CD4-positive, alpha-beta memory T cell (primary cell): ENCODE measurements at regions of chr10 and their contacts with region 1.

Region 1: DNA sequence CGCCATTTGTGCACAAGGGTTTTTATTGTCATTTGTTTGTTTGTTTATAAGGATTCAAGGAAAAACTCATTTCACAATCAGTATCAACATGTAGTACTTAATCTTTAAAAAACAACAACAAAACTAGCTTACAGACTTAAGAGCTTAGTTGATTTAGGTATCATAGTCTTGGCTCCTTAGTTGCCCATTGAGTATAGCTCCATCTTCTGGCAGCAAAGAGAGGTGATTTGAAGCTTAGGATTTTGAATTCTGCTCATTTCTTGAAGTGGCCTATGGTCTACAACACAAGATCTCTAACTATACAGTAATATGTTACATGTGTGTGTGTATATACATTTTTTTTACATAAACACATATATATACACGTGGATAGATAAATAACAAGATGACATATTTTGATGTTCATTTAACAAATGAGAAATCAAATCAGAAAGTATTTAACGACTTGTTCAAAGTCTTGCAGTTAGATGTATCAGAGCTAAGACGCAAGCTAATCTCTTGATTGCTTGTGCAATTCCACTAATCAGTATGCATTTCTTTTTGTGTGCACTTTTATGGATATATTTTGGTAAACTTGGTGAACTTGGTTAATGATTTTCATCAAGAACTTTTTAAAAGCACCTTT is 307.3 kb downstream of the CAMK1D start:
- DNase-seq: peak in 4 of 5 donors; percentile 56 to 64 (median 60)
- H3K4me3 ChIP-seq: no peak overlapping the region
- H3K4me3 Mint-ChIP-seq: no peak overlapping the region
- H3K27ac ChIP-seq: no peak overlapping the region
- H3K27ac Mint-ChIP-seq: no peak overlapping the region
- H3K4me1 ChIP-seq: no peaks in the 10 kb centered on the region
- H3K4me1 Mint-ChIP-seq: peaks cover 2 to 15% (median 7%) of the 10 kb centered on the region in 4 donors
- H3K27me3 ChIP-seq: no peaks in the 10 kb centered on the region
- H3K27me3 Mint-ChIP-seq: no peaks in the 10 kb centered on the region

Region 2: DNA sequence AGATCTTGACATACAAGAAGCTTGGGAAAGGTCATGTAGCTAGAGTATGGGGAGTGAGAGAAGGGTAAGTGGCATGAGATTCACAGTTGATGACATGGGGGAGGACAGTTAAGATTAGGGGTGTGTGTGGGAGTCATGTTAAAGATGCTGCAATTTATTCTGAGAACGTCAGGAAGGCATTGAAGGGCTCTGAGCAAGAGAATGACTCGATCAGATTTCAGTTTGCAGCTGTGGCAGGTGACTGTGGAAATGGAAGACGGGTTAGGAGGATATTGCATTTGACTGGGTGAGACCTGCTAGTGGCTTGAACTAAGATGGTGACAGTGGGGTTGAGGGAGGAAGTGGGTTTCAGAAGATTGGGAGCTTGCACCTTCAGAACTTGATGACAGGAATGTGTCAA is 455.1 kb before region 1 on chr10:
- CTCF ChIA-PET with region 1: no interaction called
- POLR2A ChIA-PET with region 1: no interaction called
- intact Hi-C with region 1: no loop called
- DNase-seq: no peak
- H3K4me3 ChIP-seq: no peak overlapping the region
- H3K4me3 Mint-ChIP-seq: peak overlapping the region in 7 of 8 donors; percentile 4 to 60 (median 35)
- H3K27ac ChIP-seq: no peak overlapping the region
- H3K27ac Mint-ChIP-seq: peak overlapping the region in 6 of 7 donors; percentile 22 to 77 (median 58)
- H3K4me1 ChIP-seq: peaks cover 37% of the 10 kb centered on the region
- H3K4me1 Mint-ChIP-seq: peaks cover 33 to 61% (median 43%) of the 10 kb centered on the region in 4 donors
- H3K27me3 ChIP-seq: no peaks in the 10 kb centered on the region
- H3K27me3 Mint-ChIP-seq: no peaks in the 10 kb centered on the region

Region 3: DNA sequence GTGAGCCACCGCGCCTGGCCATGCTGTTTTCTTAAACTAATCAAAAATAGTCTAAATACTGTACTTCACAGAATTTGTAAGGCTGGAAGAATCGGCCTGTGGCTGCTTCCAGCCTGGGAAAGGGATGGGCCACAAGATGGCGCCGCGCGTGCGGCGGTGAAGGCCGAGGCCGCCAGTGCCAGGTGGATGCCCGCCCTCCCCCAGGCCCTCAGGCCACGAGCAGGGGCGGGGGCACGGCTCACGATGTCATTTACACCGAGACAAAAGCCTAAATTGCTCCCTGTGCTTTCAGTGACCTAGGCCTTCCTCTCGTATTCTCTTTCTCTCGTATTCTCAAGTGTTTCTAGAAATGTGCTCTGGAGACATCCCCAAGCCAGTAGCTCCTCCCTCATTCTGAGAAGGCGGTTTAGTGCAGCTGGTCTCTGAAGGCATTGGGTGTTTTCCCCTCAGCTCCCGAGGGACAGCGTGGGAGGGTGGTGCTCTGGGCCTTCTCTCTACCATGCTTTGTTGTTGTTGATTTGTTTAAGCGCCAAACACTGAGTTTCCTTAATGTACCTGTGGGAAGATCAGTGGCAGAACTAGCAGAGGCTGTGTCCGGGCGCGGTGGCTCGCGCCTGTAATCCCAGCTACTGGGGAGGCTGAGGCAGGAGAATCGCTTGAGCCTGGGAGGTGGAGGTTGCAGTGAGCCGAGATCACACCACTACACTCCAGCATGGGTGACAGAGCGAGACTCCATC is 392.3 kb before region 1 on chr10:
- CTCF ChIA-PET with region 1: interaction called, 240 read pairs
- POLR2A ChIA-PET with region 1: interaction called, 10 read pairs
- intact Hi-C with region 1: loop called (anchors 1 kb)
- DNase-seq: peak; percentile 59 to 73 (median 63)
- H3K4me3 ChIP-seq: peak overlapping the region in 1 of 2 donors; percentile 27
- H3K4me3 Mint-ChIP-seq: peak overlapping the region; percentile 41 to 84 (median 77)
- H3K27ac ChIP-seq: no peak overlapping the region
- H3K27ac Mint-ChIP-seq: peak overlapping the region in 5 of 7 donors; percentile 2 to 82 (median 78)
- H3K4me1 ChIP-seq: peaks cover 4% of the 10 kb centered on the region
- H3K4me1 Mint-ChIP-seq: peaks cover 7 to 18% (median 13%) of the 10 kb centered on the region in 4 donors
- H3K27me3 ChIP-seq: no peaks in the 10 kb centered on the region
- H3K27me3 Mint-ChIP-seq: no peaks in the 10 kb centered on the region

Region 4: DNA sequence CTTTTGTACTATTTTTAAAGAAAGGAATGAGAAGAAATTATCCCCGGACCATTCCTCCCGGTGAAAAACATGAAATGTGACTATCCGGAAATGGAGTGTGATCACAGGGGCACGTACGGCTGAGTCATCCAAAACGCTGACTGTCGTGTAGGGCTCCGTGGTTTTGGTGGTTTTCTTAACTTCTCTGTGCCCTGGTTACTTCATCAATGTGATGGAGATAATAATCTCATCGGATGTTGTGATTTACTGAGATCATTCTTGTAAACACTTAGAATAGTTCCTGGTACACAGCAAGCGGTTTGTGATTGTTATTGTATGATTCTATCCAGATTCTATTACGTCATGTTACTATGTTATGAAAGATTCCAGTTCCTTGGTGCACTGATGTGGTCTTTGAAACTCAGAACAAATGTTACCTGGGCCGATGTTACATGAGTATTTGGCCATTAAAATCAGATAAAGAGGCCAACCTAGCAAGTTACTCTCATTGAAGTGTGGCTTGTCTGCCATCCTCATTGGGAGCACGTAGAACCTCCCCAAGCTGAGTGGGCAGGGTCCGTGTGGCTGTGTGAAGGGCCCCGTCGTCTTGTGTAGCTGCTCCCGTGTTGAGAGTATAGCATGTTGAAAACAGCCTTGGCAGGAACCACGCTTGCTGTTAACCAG is 207.8 kb before region 1 on chr10:
- CTCF ChIA-PET with region 1: interaction called, 10 read pairs
- POLR2A ChIA-PET with region 1: interaction called, 3 read pairs
- intact Hi-C with region 1: no loop called
- DNase-seq: peak; percentile 87 to 94 (median 92)
- H3K4me3 ChIP-seq: peak overlapping the region in 1 of 2 donors; percentile 21
- H3K4me3 Mint-ChIP-seq: peak overlapping the region; percentile 36 to 88 (median 81)
- H3K27ac ChIP-seq: peak overlapping the region; percentile 60
- H3K27ac Mint-ChIP-seq: peak overlapping the region; percentile 89 to 99 (median 99)
- H3K4me1 ChIP-seq: peaks cover 14% of the 10 kb centered on the region
- H3K4me1 Mint-ChIP-seq: peaks cover 28 to 58% (median 41%) of the 10 kb centered on the region in 4 donors
- H3K27me3 ChIP-seq: no peaks in the 10 kb centered on the region
- H3K27me3 Mint-ChIP-seq: no peaks in the 10 kb centered on the region

Region 5: DNA sequence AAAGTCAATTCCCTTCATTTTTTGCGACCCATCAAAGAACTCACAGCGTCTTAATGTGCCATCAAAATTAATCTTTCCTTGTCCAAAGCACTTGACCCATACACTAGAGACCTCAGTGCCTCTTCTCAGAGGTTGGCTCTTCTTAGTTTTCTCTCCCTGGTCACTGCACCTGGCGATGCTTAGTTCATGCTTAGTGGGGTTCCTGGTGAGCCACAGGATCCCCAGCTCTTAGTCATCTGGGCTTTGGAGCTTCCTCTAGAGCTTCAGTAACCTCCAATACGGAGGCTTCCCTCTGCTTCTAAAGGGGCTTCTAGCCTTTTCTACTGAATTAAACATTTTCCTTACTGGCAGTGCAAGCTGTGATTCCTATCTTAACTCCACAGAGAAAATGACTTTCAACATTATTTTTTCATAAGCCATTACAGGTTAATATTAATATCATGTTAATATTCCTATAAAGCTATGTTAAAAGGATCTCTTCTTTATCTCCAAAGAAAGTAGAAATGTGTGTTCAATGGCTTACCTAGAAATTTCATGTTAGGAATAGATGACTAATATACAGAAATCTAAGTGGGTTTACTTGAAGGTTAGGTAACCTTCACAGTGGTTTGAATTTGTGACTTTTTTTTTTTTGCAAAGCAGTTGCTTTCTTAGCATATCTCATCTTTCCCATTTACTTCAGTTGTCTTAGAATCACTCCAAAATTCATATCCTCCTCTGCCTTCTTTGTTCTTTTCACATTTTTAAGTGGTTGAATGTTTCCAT is 12.1 kb before region 1 on chr10:
- CTCF ChIA-PET with region 1: interaction called, 23 read pairs
- POLR2A ChIA-PET with region 1: no interaction called
- intact Hi-C with region 1: no loop called
- DNase-seq: no peak
- H3K4me3 ChIP-seq: no peak overlapping the region
- H3K4me3 Mint-ChIP-seq: no peak overlapping the region
- H3K27ac ChIP-seq: no peak overlapping the region
- H3K27ac Mint-ChIP-seq: peak overlapping the region in 1 of 7 donors; percentile 25
- H3K4me1 ChIP-seq: no peaks in the 10 kb centered on the region
- H3K4me1 Mint-ChIP-seq: peaks cover 0 to 9% (median 5%) of the 10 kb centered on the region in 4 donors
- H3K27me3 ChIP-seq: no peaks in the 10 kb centered on the region
- H3K27me3 Mint-ChIP-seq: no peaks in the 10 kb centered on the region

Region 6: GRCh38 chr10:12681252-12681651 is 24.6 kb after region 1 on chr10:
- CTCF ChIA-PET with region 1: no interaction called
- POLR2A ChIA-PET with region 1: no interaction called
- intact Hi-C with region 1: no loop called
- DNase-seq: peak in 1 of 5 donors; percentile 7
- H3K4me3 ChIP-seq: no peak overlapping the region
- H3K4me3 Mint-ChIP-seq: peak overlapping the region in 6 of 8 donors; percentile 24 to 67 (median 50)
- H3K27ac ChIP-seq: no peak overlapping the region
- H3K27ac Mint-ChIP-seq: peak overlapping the region in 3 of 7 donors; percentile 10 to 38 (median 23)
- H3K4me1 ChIP-seq: no peaks in the 10 kb centered on the region
- H3K4me1 Mint-ChIP-seq: peaks cover 6 to 15% (median 7%) of the 10 kb centered on the region in 4 donors
- H3K27me3 ChIP-seq: no peaks in the 10 kb centered on the region
- H3K27me3 Mint-ChIP-seq: no peaks in the 10 kb centered on the region

Region 7: GRCh38 chr10:12710594-12711349 is 54.1 kb after region 1 on chr10:
- CTCF ChIA-PET with region 1: interaction called, 34 read pairs
- POLR2A ChIA-PET with region 1: no interaction called
- intact Hi-C with region 1: loop called (anchors 1 kb)
- DNase-seq: peak; percentile 69 to 73 (median 70)
- H3K4me3 ChIP-seq: no peak overlapping the region
- H3K4me3 Mint-ChIP-seq: no peak overlapping the region
- H3K27ac ChIP-seq: no peak overlapping the region
- H3K27ac Mint-ChIP-seq: peak overlapping the region in 1 of 7 donors; percentile 57
- H3K4me1 ChIP-seq: peaks cover 4% of the 10 kb centered on the region
- H3K4me1 Mint-ChIP-seq: peaks cover 4 to 17% (median 7%) of the 10 kb centered on the region in 4 donors
- H3K27me3 ChIP-seq: no peaks in the 10 kb centered on the region
- H3K27me3 Mint-ChIP-seq: no peaks in the 10 kb centered on the region